Pancreas (tissue), 10 donors: ENCODE measurements at regions of chr18 and their contacts with region 1.

Region 1: GRCh38 chr18:67199993-67200617 is 316.4 kb downstream of the DSEL start:
- DNase-seq: no peak
- ATAC-seq: peak; percentile 60 to 88 (median 86)
- H3K4me3 ChIP-seq: no peak overlapping the region
- H3K27ac ChIP-seq: no peak overlapping the region
- H3K4me1 ChIP-seq: no peaks in the 10 kb centered on the region
- H3K27me3 ChIP-seq: peaks cover 0 to 25% (median 2%) of the 10 kb centered on the region in 4 donors
- CTCF ChIP-seq: peak in 3 of 4 donors; percentile 40 to 62 (median 51)

Region 2: GRCh38 chr18:67001052-67001451 is 199.1 kb before region 1 on chr18:
- intact Hi-C with region 1: no loop called
- DNase-seq: no peak
- ATAC-seq: no peak
- H3K4me3 ChIP-seq: no peak overlapping the region
- H3K27ac ChIP-seq: no peak overlapping the region
- H3K4me1 ChIP-seq: no peaks in the 10 kb centered on the region
- H3K27me3 ChIP-seq: no peaks in the 10 kb centered on the region
- CTCF ChIP-seq: no peak

Region 3: DNA sequence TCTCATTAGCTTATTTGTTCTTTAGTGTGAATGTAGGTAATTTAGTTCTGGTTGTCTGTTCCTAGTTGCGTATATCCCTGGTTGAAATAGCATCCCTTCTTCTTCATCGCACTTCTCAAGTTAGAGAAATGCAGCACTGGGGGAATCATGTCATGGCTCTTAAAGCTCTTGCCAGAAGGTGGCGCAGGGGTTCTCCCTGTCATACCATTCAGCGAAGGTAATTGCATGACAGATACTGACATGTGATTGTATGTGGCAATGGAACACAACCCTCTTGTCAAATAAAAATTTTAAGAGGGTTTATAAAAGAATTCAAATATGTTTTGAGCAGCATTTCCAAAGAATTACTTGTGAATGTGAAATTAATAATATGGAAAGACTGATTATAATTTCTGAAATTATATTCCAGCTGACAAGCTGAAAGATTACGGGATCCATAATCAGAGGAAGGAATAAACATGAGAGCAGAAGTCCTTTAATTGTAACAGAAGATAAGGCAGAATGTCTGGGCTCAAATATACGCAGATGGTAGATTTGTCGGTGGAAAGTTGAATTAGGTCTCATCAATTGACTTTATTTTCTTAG is 95.3 kb before region 1 on chr18:
- intact Hi-C with region 1: loop called in 2 of 3 experiments (anchors 5 to 10 kb)
- DNase-seq: peak in 5 of 6 donors; percentile 32 to 67 (median 43)
- ATAC-seq: peak; percentile 76 to 93 (median 90)
- H3K4me3 ChIP-seq: no peak overlapping the region
- H3K27ac ChIP-seq: no peak overlapping the region
- H3K4me1 ChIP-seq: no peaks in the 10 kb centered on the region
- H3K27me3 ChIP-seq: no peaks in the 10 kb centered on the region
- CTCF ChIP-seq: peak; percentile 27 to 60 (median 48)

Region 4: DNA sequence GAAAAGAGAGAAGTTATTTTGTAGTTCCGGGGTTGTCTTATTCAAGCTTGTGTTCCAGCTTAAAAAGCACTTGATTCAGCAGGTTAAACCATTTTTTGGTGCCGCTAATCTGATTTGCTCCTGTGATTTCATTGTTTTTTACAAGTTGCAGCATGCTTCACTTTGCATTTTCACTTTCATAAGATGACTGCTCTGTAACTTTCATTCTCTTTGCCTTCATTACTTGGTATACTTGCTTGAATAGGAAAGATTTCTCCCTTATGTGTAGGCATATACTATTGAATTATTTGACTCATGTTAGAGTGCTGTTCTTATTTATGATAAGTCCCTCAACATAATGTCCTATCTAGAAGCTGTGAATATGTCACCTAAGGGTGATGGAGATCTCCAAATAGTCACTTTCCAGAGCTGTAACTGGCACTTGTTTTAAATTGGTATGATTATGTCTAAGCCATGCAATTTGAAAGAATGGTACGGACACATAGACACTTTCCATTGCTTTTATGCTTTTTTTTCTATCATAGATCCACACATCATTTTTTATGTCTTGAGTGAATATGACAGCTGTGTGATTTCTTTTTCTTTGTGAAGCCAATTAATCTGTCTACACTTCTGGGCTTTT is 61.9 kb after region 1 on chr18:
- intact Hi-C with region 1: no loop called
- DNase-seq: no peak
- ATAC-seq: no peak
- H3K4me3 ChIP-seq: no peak overlapping the region
- H3K27ac ChIP-seq: no peak overlapping the region
- H3K4me1 ChIP-seq: no peaks in the 10 kb centered on the region
- H3K27me3 ChIP-seq: no peaks in the 10 kb centered on the region
- CTCF ChIP-seq: no peak

Region 5: DNA sequence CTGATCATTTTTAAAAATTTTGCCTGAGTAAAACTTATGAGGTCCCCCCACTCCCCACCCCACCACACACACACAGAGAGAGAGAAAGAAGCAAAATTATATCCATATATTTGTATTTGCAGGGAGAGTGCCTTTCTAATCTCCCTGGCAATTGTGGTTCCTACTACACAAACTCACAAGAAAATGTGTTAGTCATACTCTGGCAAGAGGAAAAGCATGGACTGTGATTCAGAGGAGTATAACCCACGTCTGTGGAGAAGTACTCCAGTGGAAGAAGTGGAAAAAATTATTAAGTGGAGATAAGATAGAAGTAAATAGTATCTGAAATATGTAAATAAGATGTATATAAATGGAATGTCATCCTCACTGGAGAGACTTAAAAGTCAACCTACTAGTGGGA is 202.4 kb after region 1 on chr18:
- intact Hi-C with region 1: no loop called
- DNase-seq: no peak
- ATAC-seq: no peak
- H3K4me3 ChIP-seq: no peak overlapping the region
- H3K27ac ChIP-seq: no peak overlapping the region
- H3K4me1 ChIP-seq: no peaks in the 10 kb centered on the region
- H3K27me3 ChIP-seq: no peaks in the 10 kb centered on the region
- CTCF ChIP-seq: no peak